Calu3 (cell line): ENCODE measurements at regions of chr10 and their contacts with region 1.

Region 1: GRCh38 chr10:25113191-25114035 is 61.4 kb upstream of the GPR158 start:
- DNase-seq: peak; percentile 89
- H3K4me3 Mint-ChIP-seq: peak overlapping the region; percentile 53
- H3K27ac Mint-ChIP-seq: peak overlapping the region; percentile 59
- H3K4me1 Mint-ChIP-seq: peaks cover 26% of the 10 kb centered on the region
- H3K27me3 Mint-ChIP-seq: no peaks in the 10 kb centered on the region
- CTCF ChIP-seq: peak; percentile 85

Region 2: DNA sequence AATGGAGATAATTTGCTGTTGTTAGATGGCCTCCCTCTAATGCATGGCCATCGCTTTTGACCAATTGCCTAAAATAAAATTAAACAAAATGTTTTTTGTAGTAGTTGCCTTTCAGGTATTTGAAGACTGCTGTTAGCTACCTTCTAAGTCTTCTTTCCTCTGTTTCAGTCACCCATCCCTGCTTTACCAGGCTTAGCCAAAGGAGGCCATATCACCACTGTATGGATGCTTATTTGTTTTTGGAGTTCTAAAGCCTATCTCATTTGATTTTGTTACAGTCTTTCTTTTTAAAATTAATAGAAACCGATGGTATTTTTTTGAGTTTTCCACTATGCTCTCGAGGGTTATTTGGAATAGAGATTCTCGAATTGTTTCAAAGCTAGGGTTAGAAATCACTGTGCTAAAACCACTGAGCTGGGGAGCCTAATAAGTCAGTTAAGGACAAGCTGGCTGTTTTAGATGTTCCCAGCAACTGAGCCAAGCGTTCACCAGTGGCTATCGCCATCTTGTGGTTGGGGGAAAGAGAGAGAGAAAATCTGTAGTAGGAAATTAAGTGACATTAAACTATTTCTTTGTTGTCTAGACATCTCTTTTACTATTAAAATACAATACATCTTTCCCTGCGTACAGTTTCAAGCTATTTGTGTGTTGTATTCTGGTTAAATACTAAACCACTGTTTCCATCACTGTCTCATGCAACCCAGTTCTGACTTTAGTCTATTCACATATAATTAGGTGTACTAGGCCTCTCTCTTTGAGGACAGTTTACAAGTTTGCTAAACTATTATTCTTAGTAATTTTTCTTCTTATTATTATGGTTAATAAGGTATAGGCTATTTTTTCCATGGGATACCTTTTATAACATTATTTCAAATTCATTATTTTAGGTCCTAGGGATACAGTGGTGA is 113.6 kb after region 1 on chr10:
- CTCF ChIA-PET with region 1: interaction called, 43 read pairs
- intact Hi-C with region 1: loop called (anchors 1 kb)
- DNase-seq: peak; percentile 59
- H3K4me3 Mint-ChIP-seq: no peak overlapping the region
- H3K27ac Mint-ChIP-seq: no peak overlapping the region
- H3K4me1 Mint-ChIP-seq: no peaks in the 10 kb centered on the region
- H3K27me3 Mint-ChIP-seq: no peaks in the 10 kb centered on the region
- CTCF ChIP-seq: peak; percentile 72

Region 3: GRCh38 chr10:25455980-25456567 is 342.7 kb after region 1 on chr10:
- CTCF ChIA-PET with region 1: no interaction called
- intact Hi-C with region 1: no loop called
- DNase-seq: no peak
- H3K4me3 Mint-ChIP-seq: no peak overlapping the region
- H3K27ac Mint-ChIP-seq: no peak overlapping the region
- H3K4me1 Mint-ChIP-seq: no peaks in the 10 kb centered on the region
- H3K27me3 Mint-ChIP-seq: no peaks in the 10 kb centered on the region
- CTCF ChIP-seq: no peak

Region 4: GRCh38 chr10:25682203-25682851 is 568.9 kb after region 1 on chr10:
- CTCF ChIA-PET with region 1: interaction called, 4 read pairs
- intact Hi-C with region 1: loop called (anchors 1 kb)
- DNase-seq: peak; percentile 33
- H3K4me3 Mint-ChIP-seq: peak overlapping the region; percentile 21
- H3K27ac Mint-ChIP-seq: no peak overlapping the region
- H3K4me1 Mint-ChIP-seq: no peaks in the 10 kb centered on the region
- H3K27me3 Mint-ChIP-seq: peaks cover 28% of the 10 kb centered on the region
- CTCF ChIP-seq: no peak

Region 5: DNA sequence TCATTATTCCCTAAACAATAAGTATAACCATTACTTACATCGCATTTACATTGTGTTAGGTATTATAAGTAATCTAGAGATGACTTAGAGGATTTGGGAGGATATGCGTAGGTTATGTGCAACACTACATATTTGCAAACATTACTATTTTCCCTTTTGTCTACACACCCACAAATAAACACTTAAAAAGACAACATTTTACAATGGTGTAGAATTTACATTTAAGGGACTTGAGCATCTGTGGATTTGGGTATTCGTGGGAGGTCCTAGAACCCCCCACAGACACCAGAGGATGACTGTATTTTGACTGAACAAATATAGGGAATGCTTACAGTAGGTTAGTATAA is 600.5 kb after region 1 on chr10:
- CTCF ChIA-PET with region 1: no interaction called
- intact Hi-C with region 1: loop called (anchors 10 kb)
- DNase-seq: no peak
- H3K4me3 Mint-ChIP-seq: no peak overlapping the region
- H3K27ac Mint-ChIP-seq: no peak overlapping the region
- H3K4me1 Mint-ChIP-seq: peaks cover 8% of the 10 kb centered on the region
- H3K27me3 Mint-ChIP-seq: peaks cover 34% of the 10 kb centered on the region
- CTCF ChIP-seq: no peak